IMR-90 (cell line): ENCODE measurements at regions of chr12 and their contacts with region 1.

Region 1: DNA sequence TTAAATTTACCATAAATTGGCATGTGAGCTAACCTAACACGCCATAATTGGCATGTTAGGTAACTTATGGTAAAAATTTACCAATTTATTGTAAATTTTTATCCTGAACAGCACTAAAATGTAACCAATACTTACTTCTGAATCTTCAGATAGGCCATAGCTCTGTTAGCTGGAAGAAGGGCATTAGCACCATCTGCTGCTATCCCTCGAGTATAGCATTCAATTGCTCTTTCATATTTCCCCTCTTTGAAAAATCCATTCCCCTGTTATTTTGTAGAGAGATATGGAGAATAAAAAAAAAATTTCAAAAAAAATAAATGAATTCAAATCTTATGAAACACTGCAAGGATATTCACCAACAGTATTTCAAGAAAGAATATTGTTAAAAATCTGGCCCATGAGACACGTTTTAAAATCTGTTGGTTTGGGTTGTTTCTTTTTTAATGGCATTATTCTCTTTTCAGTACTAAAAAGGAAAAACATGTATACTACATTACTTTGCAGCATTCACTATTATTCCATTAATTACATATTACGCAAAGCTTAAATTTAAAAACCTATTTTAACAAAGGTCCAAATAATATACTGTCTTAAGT is 19.1 kb downstream of the RPAP3 start:
- DNase-seq: peak; percentile 67
- ATAC-seq: peak; percentile 97
- H3K4me3 ChIP-seq: no peak overlapping the region
- H3K27ac ChIP-seq: no peak overlapping the region
- H3K4me1 ChIP-seq: no peaks in the 10 kb centered on the region
- H3K27me3 ChIP-seq: no peaks in the 10 kb centered on the region
- CTCF ChIP-seq: peak; percentile 82
- POLR2A ChIP-seq: no peak
- RAD21 ChIP-seq: peak; percentile 86

Region 2: DNA sequence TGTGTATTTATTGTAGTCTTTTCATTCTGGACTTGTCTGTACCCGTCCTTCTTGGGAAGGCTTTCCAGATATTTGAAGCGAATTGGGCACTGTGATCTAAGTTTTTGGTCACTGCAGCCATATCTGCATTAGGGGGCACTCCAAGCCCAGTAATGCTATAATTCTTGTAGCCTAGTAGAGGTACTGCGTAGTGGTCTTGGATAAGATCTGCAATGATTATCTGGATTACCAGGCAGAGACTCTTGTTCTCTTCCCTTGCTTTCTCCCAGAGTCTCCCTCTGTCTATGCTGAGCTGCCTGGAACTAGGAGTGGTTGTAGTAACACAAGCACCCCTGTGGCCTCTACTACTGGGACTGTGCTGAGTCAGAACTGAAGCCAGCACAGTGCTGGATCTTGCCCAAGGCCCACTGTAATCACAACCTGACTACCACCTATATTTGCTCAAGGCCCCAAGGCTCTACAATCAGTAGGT is 1344.1 kb before region 1 on chr12:
- CTCF ChIA-PET with region 1: no interaction called
- POLR2A ChIA-PET with region 1: no interaction called
- dilution Hi-C with region 1: no loop called
- in situ Hi-C with region 1: loop called (anchors 25 kb)
- intact Hi-C with region 1: no loop called
- DNase-seq: peak; percentile 63
- ATAC-seq: peak; percentile 91
- H3K4me3 ChIP-seq: no peak overlapping the region
- H3K27ac ChIP-seq: no peak overlapping the region
- H3K4me1 ChIP-seq: peaks cover 3% of the 10 kb centered on the region; the same call in 1 of the 2 replicates
- H3K27me3 ChIP-seq: no peaks in the 10 kb centered on the region
- CTCF ChIP-seq: peak; percentile 53
- POLR2A ChIP-seq: no peak
- RAD21 ChIP-seq: peak; percentile 63

Region 3: DNA sequence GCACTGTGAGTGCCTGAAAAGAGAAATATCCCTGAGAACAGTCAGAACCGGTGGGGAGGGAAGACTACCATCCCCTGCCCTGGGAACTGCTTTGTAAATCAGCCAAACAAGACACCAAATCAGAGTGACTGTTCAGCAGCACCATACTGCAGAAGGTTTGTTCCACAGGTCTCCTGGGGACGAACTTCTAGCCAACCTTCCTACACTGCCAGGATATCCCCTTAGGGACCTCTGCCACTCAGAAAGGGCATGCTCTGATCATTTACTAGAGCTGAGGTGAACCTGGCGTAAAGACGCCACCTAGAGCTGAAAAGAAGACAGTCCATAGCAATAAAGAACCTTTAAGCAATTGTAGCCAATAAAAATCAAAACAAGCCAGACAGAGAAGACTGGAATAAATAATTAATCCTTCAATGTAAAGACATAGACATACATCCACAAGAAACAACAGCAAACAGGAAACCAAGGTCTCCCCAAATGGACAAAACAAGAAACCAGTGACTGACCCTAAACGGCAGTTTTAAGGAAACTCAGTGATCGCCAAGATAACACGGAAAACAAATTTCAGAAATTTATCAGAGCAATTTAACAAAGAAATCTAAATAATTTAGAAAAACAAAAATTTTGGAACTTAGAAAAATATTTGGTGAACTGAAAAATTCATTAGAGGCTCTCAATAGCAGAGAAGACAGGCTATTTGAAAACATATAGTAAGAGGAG is 378.9 kb before region 1 on chr12:
- CTCF ChIA-PET with region 1: no interaction called
- POLR2A ChIA-PET with region 1: no interaction called
- dilution Hi-C with region 1: no loop called
- in situ Hi-C with region 1: no loop called
- intact Hi-C with region 1: loop called (anchors 10 kb)
- DNase-seq: peak; percentile 73
- ATAC-seq: peak; percentile 91
- H3K4me3 ChIP-seq: no peak overlapping the region
- H3K27ac ChIP-seq: no peak overlapping the region
- H3K4me1 ChIP-seq: peaks cover 6% of the 10 kb centered on the region
- H3K27me3 ChIP-seq: no peaks in the 10 kb centered on the region
- CTCF ChIP-seq: peak; percentile 80
- POLR2A ChIP-seq: no peak
- RAD21 ChIP-seq: peak; percentile 90